Colonic mucosa (tissue), 4 donors: ENCODE measurements at regions of chr3 and their contacts with region 1.

Region 1: DNA sequence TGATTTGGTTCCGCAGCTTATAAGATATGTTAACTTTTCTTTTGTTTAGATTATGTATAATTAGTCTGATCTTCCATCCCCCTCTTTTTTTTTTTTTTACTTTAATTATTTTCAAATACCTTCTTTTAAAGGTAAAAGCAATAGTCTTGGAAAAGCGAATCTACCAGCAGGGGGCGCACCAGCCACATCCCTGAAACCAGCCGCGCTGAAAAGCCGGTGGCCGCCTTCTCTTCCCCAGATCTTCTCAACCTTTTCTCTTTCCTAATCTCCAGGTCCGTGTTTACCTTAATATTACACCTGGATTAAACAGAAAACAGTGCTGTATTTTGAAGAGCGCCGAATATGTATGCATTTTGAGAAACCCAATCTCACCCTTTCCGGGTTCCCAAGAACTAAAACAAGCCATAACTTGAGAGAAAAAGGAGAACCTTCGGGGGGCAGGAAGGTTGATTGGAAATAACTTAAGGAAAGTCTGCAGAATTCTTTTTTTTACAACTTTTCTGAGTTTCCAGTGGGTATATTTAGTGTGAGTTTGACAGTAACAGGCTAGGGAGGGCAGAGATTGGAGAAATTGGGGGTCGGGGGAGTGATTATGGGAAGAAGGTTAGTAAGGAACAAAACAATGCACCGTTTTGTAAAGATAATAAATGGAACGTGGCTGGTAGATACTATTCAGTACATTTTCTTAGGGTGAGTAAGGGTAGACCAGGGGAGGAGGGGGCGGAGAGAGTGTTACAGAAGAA is 2.0 kb upstream of the SOX2 start:
- DNase-seq: peak; percentile 82
- H3K4me3 ChIP-seq: no peak overlapping the region
- H3K27ac ChIP-seq: no peak overlapping the region
- H3K4me1 ChIP-seq: peaks cover 3% of the 10 kb centered on the region
- H3K27me3 ChIP-seq: peaks cover 84% of the 10 kb centered on the region
- CTCF ChIP-seq: peak; percentile 80

Region 2: GRCh38 chr3:182258538-182259177 is 549.0 kb after region 1 on chr3:
- intact Hi-C with region 1: loop called (anchors 2 kb)
- DNase-seq: no peak
- H3K4me3 ChIP-seq: no peak overlapping the region
- H3K27ac ChIP-seq: no peak overlapping the region
- H3K4me1 ChIP-seq: no peaks in the 10 kb centered on the region
- H3K27me3 ChIP-seq: no peaks in the 10 kb centered on the region
- CTCF ChIP-seq: peak; percentile 30

Region 3: GRCh38 chr3:182325213-182325941 is 615.7 kb after region 1 on chr3:
- intact Hi-C with region 1: no loop called
- DNase-seq: no peak
- H3K4me3 ChIP-seq: no peak overlapping the region
- H3K27ac ChIP-seq: no peak overlapping the region
- H3K4me1 ChIP-seq: no peaks in the 10 kb centered on the region
- H3K27me3 ChIP-seq: no peaks in the 10 kb centered on the region
- CTCF ChIP-seq: no peak

Region 4: GRCh38 chr3:182618085-182618732 is 908.5 kb after region 1 on chr3:
- intact Hi-C with region 1: loop called (anchors 5 kb)
- DNase-seq: no peak
- H3K4me3 ChIP-seq: no peak overlapping the region
- H3K27ac ChIP-seq: no peak overlapping the region
- H3K4me1 ChIP-seq: no peaks in the 10 kb centered on the region
- H3K27me3 ChIP-seq: no peaks in the 10 kb centered on the region
- CTCF ChIP-seq: peak; percentile 50

Region 5: DNA sequence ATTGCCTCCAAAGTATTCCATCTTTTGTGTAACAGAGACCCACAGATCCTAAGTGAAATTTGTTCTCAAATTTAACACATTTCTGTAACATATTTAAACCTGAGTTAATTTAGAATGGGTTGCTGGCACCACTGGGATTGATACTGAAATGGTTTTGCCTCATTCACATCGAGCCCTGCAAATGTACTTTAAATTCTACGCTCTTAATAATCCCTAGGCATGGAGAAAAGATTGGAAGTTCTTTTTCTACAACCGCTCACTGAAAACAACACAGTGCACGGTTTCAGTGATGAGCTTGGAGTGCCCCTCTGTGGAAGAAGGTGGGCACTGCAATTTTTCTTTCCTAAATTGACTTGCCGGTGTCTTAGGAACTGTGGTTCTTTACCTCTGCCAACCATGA is 973.7 kb after region 1 on chr3:
- intact Hi-C with region 1: loop called (anchors 5 kb)
- DNase-seq: peak; percentile 82
- H3K4me3 ChIP-seq: peak overlapping the region; percentile 46
- H3K27ac ChIP-seq: peak overlapping the region; percentile 68
- H3K4me1 ChIP-seq: no peaks in the 10 kb centered on the region
- H3K27me3 ChIP-seq: no peaks in the 10 kb centered on the region
- CTCF ChIP-seq: peak; percentile 89